Upper lobe of right lung (tissue), 1 donor: ENCODE measurements at regions of chr3 and their contacts with region 1.

Region 1: DNA sequence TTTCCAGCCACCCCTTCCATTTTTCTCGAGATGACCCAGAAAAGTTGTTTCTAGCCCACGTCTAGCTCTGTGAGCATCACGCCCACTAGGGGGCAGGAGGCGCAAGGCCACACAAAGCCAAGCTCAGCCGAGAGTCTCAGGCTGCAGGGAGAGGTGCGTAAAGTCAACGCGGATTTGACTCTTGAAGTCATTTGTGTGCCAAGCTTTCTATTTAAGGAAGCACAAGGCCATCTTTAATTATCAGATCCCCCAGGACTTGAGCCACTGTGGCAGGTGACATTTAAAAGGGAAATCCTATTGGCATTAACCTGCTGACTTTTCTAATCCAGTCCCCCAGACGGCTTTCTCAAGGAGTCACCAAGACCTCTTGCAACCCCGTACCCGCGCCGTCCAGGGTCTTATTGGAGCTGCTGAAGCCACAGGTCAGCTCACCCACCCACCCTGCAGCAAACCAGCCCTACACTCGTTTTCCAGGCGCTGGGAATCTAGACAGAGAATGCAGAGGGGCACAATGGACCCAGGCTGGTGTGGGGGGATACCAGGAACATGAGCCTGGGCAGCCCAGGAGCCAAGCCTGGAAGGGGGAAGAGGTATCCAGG is 62.1 kb downstream of the CAPN7 start:
- DNase-seq: peak; percentile 92
- ATAC-seq: peak; percentile 85
- H3K4me3 ChIP-seq: no peak overlapping the region
- H3K27ac ChIP-seq: peak overlapping the region; percentile 58
- H3K4me1 ChIP-seq: peaks cover 59% of the 10 kb centered on the region
- H3K27me3 ChIP-seq: no peaks in the 10 kb centered on the region
- CTCF ChIP-seq: peak; percentile 94

Region 2: GRCh38 chr3:14822670-14823390 is 445.3 kb before region 1 on chr3:
- intact Hi-C with region 1: no loop called
- DNase-seq: no peak
- ATAC-seq: peak; percentile 58
- H3K4me3 ChIP-seq: no peak overlapping the region
- H3K27ac ChIP-seq: no peak overlapping the region
- H3K4me1 ChIP-seq: peaks cover 13% of the 10 kb centered on the region
- H3K27me3 ChIP-seq: no peaks in the 10 kb centered on the region
- CTCF ChIP-seq: no peak

Region 3: DNA sequence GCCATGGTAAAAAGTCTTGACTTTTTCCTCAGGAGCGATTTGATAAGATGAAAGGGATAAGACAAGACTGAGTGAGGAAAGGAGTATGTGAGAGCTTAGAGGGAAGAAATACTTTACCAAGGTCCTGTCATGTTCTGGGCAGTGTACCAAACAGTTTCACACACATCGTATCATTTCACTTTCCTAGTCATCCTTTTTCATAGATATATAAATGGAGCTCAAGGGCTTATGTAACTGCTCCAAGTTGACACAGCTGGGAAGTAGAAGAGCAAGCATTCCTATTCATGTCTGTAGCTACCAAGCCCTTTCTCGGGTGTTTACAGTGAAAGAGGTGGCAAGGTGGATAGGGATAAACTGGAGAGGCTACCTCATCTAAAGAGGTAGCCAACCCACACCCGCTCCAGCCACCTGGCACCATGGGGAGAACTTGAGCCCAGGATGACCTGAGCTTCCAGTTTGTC is 260.4 kb before region 1 on chr3:
- intact Hi-C with region 1: no loop called
- DNase-seq: no peak
- ATAC-seq: peak; percentile 78
- H3K4me3 ChIP-seq: no peak overlapping the region
- H3K27ac ChIP-seq: no peak overlapping the region
- H3K4me1 ChIP-seq: peaks cover 6% of the 10 kb centered on the region
- H3K27me3 ChIP-seq: no peaks in the 10 kb centered on the region
- CTCF ChIP-seq: no peak

Region 4: DNA sequence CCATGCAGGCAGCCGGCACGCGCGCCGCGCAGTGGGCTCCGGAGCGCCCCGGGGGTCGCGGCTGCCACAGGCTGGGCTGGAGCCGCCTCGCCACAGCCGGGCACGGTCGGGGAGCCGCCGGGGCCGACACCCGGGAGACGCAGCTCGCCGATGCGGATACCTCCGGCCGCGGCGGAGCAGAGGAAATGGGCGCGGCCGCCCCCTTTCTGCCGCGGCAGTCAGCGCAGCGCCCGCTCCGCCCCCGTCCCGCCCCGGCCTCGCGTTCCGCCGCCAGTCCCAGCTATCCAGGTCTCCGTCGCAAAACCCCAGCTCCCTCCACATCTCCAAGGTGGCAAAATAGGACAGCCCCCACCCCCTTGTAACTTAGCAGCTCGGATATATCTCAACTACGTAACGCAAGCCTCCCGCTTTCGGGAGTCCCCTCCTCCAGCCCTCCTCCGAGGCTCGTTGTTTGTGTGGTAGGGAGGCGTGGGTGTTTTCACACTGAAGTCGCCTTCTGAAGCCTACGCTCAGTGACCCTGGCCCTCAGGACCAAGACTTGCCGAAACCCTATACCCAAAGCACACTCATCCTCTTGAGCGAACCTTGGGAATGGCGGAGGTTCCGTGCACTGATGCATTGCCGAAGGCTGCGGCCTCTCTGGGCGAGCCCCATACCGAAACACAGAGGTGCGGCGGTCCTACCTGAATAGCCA is 64.4 kb after region 1 on chr3 and contains the start of gene SH3BP5:
- intact Hi-C with region 1: loop called (anchors 5 kb)
- DNase-seq: peak; percentile 90
- ATAC-seq: peak; percentile 96
- H3K4me3 ChIP-seq: peak within 1 kb of the TSS; percentile 95
- H3K27ac ChIP-seq: peak within 1 kb of the TSS; percentile 85
- H3K4me1 ChIP-seq: peaks cover 22% of the 10 kb centered on the region
- H3K27me3 ChIP-seq: no peaks in the 10 kb centered on the region
- CTCF ChIP-seq: peak; percentile 71
- total RNA-seq, gene SH3BP5: 110 TPM

Region 5: GRCh38 chr3:15384510-15385237 is 116.5 kb after region 1 on chr3:
- intact Hi-C with region 1: loop called (anchors 10 kb)
- DNase-seq: no peak
- ATAC-seq: no peak
- H3K4me3 ChIP-seq: no peak overlapping the region
- H3K27ac ChIP-seq: no peak overlapping the region
- H3K4me1 ChIP-seq: no peaks in the 10 kb centered on the region
- H3K27me3 ChIP-seq: no peaks in the 10 kb centered on the region
- CTCF ChIP-seq: no peak

Region 6: GRCh38 chr3:15667484-15667883 is 399.4 kb after region 1 on chr3:
- intact Hi-C with region 1: no loop called
- DNase-seq: no peak
- ATAC-seq: no peak
- H3K4me3 ChIP-seq: no peak overlapping the region
- H3K27ac ChIP-seq: no peak overlapping the region
- H3K4me1 ChIP-seq: no peaks in the 10 kb centered on the region
- H3K27me3 ChIP-seq: no peaks in the 10 kb centered on the region
- CTCF ChIP-seq: no peak